Left cardiac atrium (tissue), 4 donors: ENCODE measurements at regions of chr13 and their contacts with region 1.

Region 1: DNA sequence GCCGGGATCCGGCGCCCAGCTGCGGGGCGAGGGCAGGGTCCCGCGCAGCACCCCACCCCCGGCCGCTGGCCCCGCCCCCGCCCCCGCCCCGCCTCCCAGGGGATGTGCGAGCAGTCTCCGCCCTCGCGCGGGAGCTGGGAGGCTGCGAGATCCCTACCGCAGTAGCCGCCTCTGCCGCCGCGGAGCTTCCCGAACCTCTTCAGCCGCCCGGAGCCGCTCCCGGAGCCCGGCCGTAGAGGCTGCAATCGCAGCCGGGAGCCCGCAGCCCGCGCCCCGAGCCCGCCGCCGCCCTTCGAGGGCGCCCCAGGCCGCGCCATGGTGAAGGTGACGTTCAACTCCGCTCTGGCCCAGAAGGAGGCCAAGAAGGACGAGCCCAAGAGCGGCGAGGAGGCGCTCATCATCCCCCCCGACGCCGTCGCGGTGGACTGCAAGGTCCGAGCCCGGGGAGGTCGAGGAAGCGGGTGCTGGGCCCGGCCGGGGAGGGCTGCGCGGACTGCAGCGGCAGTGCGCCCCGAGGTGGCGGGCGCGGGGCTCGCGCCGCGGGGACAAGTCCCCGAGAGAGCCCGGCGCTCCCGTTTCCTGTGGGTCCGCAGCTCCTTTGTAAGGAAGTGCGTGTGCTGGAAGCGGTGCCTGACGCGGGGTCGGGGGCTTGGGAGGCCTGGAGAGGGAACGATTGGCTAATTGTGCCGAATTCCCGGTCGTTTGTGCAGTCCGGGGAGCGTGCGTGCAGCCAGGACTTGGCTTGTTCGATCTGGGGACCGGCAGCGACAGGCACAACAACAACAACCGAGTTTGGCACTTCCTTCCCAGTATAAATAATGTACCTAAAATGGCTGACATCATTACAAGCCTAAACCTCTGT is at the start of gene ITM2B:
- DNase-seq: peak; percentile 84
- ATAC-seq: peak; percentile 93 to 95
- total RNA-seq, gene ITM2B: 537 to 557 TPM

Region 2: GRCh38 chr13:48110931-48111721 is 122.2 kb before region 1 on chr13:
- intact Hi-C with region 1: loop called in 1 of 2 experiments (anchors 5 kb)
- DNase-seq: peak; percentile 60
- ATAC-seq: peak; percentile 83 to 87

Region 3: GRCh38 chr13:48126944-48127830 is 106.1 kb before region 1 on chr13:
- intact Hi-C with region 1: loop called (anchors 5 kb)
- DNase-seq: peak; percentile 58
- ATAC-seq: peak; percentile 85 to 86

Region 4: GRCh38 chr13:48184260-48184659 is 49.0 kb before region 1 on chr13:
- intact Hi-C with region 1: no loop called
- DNase-seq: no peak
- ATAC-seq: no peak

Region 5: DNA sequence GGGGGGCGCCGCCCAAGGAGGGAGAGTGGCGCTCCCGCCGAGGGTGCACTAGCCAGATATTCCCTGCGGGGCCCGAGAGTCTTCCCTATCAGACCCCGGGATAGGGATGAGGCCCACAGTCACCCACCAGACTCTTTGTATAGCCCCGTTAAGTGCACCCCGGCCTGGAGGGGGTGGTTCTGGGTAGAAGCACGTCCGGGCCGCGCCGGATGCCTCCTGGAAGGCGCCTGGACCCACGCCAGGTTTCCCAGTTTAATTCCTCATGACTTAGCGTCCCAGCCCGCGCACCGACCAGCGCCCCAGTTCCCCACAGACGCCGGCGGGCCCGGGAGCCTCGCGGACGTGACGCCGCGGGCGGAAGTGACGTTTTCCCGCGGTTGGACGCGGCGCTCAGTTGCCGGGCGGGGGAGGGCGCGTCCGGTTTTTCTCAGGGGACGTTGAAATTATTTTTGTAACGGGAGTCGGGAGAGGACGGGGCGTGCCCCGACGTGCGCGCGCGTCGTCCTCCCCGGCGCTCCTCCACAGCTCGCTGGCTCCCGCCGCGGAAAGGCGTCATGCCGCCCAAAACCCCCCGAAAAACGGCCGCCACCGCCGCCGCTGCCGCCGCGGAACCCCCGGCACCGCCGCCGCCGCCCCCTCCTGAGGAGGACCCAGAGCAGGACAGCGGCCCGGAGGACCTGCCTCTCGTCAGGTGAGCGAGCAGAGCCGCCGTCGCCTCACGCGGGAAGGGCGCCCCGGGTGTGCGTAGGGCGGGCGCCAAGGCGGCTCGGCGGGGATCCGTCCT is 70.3 kb after region 1 on chr13 and contains the start of gene RB1:
- intact Hi-C with region 1: loop called (anchors 5 to 10 kb)
- DNase-seq: peak; percentile 97
- ATAC-seq: peak; percentile 95 to 97
- total RNA-seq, gene RB1: 24.5 to 25.2 TPM